Heart right ventricle (tissue), 16 donors: ENCODE measurements at regions of chr10 and their contacts with region 1.

Region 1: GRCh38 chr10:76778914-76779795 is 858.5 kb downstream of the KCNMA1 start:
- DNase-seq: no peak
- ATAC-seq: no peak
- H3K4me3 ChIP-seq: no peak overlapping the region
- H3K27ac ChIP-seq: peak overlapping the region in 1 of 10 donors; percentile 40
- H3K4me1 ChIP-seq: peaks cover 0 to 11% (median 0%) of the 10 kb centered on the region in 9 donors
- H3K27me3 ChIP-seq: no peaks in the 10 kb centered on the region
- CTCF ChIP-seq: peak in 3 of 9 donors; percentile 7 to 20 (median 13)

Region 2: GRCh38 chr10:76432274-76433012 is 346.7 kb before region 1 on chr10:
- intact Hi-C with region 1: loop called in 3 of 10 experiments (anchors 5 to 10 kb)
- DNase-seq: peak; percentile 14 to 48
- ATAC-seq: peak in 7 of 8 donors; percentile 28 to 71 (median 47)
- H3K4me3 ChIP-seq: no peak overlapping the region
- H3K27ac ChIP-seq: peak overlapping the region; percentile 46 to 89 (median 82)
- H3K4me1 ChIP-seq: peaks cover 22 to 85% (median 67%) of the 10 kb centered on the region in 9 donors
- H3K27me3 ChIP-seq: no peaks in the 10 kb centered on the region
- CTCF ChIP-seq: no peak

Region 3: DNA sequence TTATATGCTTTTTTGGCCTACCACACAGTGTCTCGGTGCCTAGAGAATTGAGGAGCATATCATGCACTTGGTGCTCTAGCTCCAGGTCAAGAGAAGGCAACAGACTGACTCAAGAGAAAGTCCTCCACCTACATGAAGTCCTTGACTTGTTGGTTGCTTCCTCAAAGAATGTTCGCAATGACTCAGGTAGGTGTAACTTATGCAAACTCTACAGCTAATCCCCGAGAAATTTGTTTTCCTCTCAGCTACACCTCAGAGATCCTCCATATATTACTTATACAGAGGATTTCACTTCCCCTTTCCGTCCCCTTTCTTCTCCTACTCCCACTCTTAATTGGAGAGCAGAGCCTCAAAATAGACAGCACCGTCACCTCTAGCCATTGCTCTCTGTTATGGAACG is 154.7 kb before region 1 on chr10:
- intact Hi-C with region 1: loop called in 1 of 10 experiments (anchors 10 kb)
- DNase-seq: no peak
- ATAC-seq: no peak
- H3K4me3 ChIP-seq: no peak overlapping the region
- H3K27ac ChIP-seq: no peak overlapping the region
- H3K4me1 ChIP-seq: peaks cover 0 to 16% (median 6%) of the 10 kb centered on the region in 9 donors
- H3K27me3 ChIP-seq: no peaks in the 10 kb centered on the region
- CTCF ChIP-seq: no peak

Region 4: DNA sequence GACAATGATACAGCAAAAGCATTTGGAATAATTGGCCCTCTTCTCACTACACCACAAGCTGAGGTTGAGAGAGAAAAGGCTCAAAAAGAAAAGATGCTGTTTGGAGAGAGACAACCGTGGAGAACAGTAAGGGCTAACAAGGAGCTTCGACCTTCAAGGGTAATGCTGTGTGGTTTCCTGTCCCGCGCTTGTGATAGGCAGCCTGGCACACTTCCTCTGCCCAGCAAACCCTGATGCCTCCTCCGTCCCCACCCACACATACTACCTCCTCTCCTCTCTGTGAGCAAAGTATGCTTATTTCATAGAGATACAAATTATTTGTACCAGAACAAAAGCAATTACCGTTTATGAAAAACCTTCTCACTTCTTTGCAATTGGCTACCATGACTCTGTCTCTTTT is 103.1 kb after region 1 on chr10:
- intact Hi-C with region 1: loop called in 3 of 10 experiments (anchors 2 to 5 kb)
- DNase-seq: peak in 1 of 2 donors; percentile 24
- ATAC-seq: peak in 2 of 8 donors; percentile 43
- H3K4me3 ChIP-seq: no peak overlapping the region
- H3K27ac ChIP-seq: no peak overlapping the region
- H3K4me1 ChIP-seq: peaks cover 0 to 43% (median 8%) of the 10 kb centered on the region in 9 donors
- H3K27me3 ChIP-seq: peaks cover 0 to 6% (median 0%) of the 10 kb centered on the region in 7 donors
- CTCF ChIP-seq: no peak

Region 5: GRCh38 chr10:76984559-76985443 is 205.6 kb after region 1 on chr10:
- intact Hi-C with region 1: loop called in 2 of 10 experiments (anchors 10 kb)
- DNase-seq: peak; percentile 47 to 58
- ATAC-seq: peak in 6 of 8 donors; percentile 57 to 87 (median 72)
- H3K4me3 ChIP-seq: no peak overlapping the region
- H3K27ac ChIP-seq: no peak overlapping the region
- H3K4me1 ChIP-seq: no peaks in the 10 kb centered on the region
- H3K27me3 ChIP-seq: peaks cover 0 to 8% (median 0%) of the 10 kb centered on the region in 7 donors
- CTCF ChIP-seq: peak; percentile 65 to 97 (median 95)